ENCODE measurements at regions of chr7 and their contacts with region 1.

Region 1: GRCh38 chr7:37323966-37324365 is 124.7 kb downstream of the ELMO1 start:
- DNase-seq: no peak
- ATAC-seq: no peak
- H3K4me3 Mint-ChIP-seq: no peak overlapping the region
- H3K27ac Mint-ChIP-seq: no peak overlapping the region
- H3K4me1 Mint-ChIP-seq: peaks cover 21% of the 10 kb centered on the region
- H3K27me3 Mint-ChIP-seq: no peaks in the 10 kb centered on the region
- CTCF ChIP-seq: no peak

Region 2: GRCh38 chr7:37234928-37235327 is 89.0 kb before region 1 on chr7:
- CTCF ChIA-PET with region 1: no interaction called
- POLR2A ChIA-PET with region 1: no interaction called
- intact Hi-C with region 1: no loop called
- DNase-seq: peak; percentile 14
- ATAC-seq: no peak
- H3K4me3 Mint-ChIP-seq: no peak overlapping the region
- H3K27ac Mint-ChIP-seq: no peak overlapping the region
- H3K4me1 Mint-ChIP-seq: peaks cover 12% of the 10 kb centered on the region
- H3K27me3 Mint-ChIP-seq: no peaks in the 10 kb centered on the region
- CTCF ChIP-seq: peak; percentile 52

Region 3: DNA sequence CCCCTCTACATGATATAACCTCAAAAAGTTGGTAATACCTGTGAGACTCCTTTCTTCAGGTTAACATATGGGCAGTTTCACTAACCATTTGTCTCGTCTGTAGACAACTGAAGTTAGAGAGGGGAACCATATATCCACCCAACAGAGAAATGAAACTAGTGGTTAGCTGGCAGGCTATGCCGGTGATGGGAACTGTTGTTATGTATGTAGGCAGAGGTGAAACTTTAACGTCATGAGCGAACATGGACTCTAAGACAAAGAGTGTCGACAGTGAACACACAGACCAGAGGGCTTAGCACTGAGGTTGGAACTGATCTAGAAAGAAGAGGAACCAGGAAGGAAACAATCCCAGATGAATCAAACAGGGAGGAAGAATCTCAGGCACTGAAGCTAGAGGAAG is 12.3 kb after region 1 on chr7:
- CTCF ChIA-PET with region 1: interaction called, 10 read pairs
- POLR2A ChIA-PET with region 1: interaction called, 5 read pairs
- intact Hi-C with region 1: no loop called
- DNase-seq: peak; percentile 54
- ATAC-seq: peak; percentile 85
- H3K4me3 Mint-ChIP-seq: peak overlapping the region; percentile 6
- H3K27ac Mint-ChIP-seq: peak overlapping the region; percentile 64
- H3K4me1 Mint-ChIP-seq: peaks cover 72% of the 10 kb centered on the region
- H3K27me3 Mint-ChIP-seq: no peaks in the 10 kb centered on the region
- CTCF ChIP-seq: no peak

Region 4: GRCh38 chr7:38122501-38122900 is 798.5 kb after region 1 on chr7:
- CTCF ChIA-PET with region 1: no interaction called
- POLR2A ChIA-PET with region 1: no interaction called
- intact Hi-C with region 1: no loop called
- DNase-seq: no peak
- ATAC-seq: no peak
- H3K4me3 Mint-ChIP-seq: no peak overlapping the region
- H3K27ac Mint-ChIP-seq: no peak overlapping the region
- H3K4me1 Mint-ChIP-seq: peaks cover 7% of the 10 kb centered on the region
- H3K27me3 Mint-ChIP-seq: peaks cover 6% of the 10 kb centered on the region
- CTCF ChIP-seq: no peak

Measured in activated CD8-positive, alpha-beta T cell treated with anti-CD3 and anti-CD28 coated beads for 36 hours (primary cell).